HEK293T (cell line): ENCODE measurements at regions of chr17 and their contacts with region 1.

Region 1: GRCh38 chr17:77331301-77331864 is 190.6 kb downstream of the SEC14L1 start:
- DNase-seq: peak; percentile 90

Region 2: GRCh38 chr17:77419547-77420094 is 88.2 kb after region 1 on chr17:
- CTCF ChIA-PET with region 1: no interaction called
- POLR2A ChIA-PET with region 1: no interaction called
- DNase-seq: peak; percentile 59

Region 3: DNA sequence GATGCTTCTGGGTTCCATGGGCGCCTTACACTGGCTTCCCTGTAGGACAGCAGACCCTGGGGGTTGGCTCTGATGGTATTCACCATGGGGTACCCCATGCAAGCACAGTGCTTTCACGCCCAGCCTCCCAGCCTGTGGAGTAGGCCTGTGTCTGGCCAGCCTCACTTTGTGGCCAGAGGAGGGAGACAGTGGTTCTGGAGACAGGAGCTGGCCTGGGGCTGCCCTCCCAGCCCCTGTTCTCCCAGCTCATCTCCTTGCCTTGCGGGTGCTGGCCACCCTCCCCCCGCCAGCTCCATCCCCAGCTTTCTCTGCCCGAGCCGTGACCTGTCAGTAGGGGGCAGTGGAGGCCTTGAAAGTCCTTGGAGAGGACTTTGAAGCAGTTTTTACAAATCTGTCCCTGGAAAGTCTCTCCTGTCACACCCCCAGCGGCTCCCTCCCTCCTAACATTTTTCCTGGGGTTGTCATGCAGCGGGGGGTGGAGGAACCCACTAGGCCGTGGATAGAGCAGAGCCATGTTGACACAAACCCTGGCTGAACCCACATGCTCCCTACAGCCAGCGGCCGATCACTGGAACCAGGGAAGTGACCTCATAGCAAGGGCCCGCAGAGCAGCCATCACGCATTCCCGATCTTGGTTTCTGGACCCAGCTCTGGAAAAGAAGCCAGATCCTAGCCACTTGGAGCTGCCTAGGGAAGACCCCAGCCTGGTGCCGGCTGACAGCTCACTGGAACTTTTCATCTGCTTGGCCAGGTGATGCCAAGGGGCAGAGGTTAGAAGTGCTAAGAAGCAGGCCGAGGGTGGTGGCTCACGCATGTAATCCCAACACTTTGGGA is 98.8 kb after region 1 on chr17:
- CTCF ChIA-PET with region 1: interaction called, 13 read pairs
- POLR2A ChIA-PET with region 1: no interaction called
- DNase-seq: peak; percentile 78

Region 4: GRCh38 chr17:77494664-77495435 is 163.5 kb after region 1 on chr17:
- CTCF ChIA-PET with region 1: interaction called, 14 read pairs
- POLR2A ChIA-PET with region 1: no interaction called
- DNase-seq: peak; percentile 89